A549 (cell line): ENCODE measurements at regions of chr15 and their contacts with region 1.

Region 1: DNA sequence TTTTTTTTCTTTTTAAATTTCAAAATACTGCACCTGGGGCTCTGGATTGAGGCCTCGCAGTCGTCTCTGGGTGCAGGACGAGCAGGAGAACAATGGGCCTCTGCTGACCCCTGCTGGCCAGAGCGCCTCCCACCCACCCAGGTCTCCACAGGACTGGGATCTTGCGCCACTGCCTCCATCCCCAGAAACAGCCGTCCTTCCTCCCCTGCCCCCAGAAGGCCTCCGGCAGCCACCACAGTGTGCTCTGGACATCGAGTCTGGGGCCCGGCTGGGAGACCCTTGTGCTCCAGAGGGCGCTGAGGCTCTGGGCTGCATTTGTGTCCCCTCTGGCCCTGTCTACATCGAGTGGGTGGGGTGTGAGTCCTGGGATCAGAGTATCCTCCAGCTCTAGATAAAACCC is 6.6 kb upstream of the ACSBG1 start:
- DNase-seq: peak; percentile 83 to 94
- ATAC-seq: peak; percentile 95 to 98
- H3K4me3 ChIP-seq: no peak overlapping the region
- H3K27ac ChIP-seq: no peak overlapping the region
- H3K4me1 ChIP-seq: no peaks in the 10 kb centered on the region
- CTCF ChIP-seq: peak; percentile 94
- EP300 ChIP-seq: no peak
- POLR2A ChIP-seq: no peak
- RAD21 ChIP-seq: peak; percentile 96 to 99

Region 2: DNA sequence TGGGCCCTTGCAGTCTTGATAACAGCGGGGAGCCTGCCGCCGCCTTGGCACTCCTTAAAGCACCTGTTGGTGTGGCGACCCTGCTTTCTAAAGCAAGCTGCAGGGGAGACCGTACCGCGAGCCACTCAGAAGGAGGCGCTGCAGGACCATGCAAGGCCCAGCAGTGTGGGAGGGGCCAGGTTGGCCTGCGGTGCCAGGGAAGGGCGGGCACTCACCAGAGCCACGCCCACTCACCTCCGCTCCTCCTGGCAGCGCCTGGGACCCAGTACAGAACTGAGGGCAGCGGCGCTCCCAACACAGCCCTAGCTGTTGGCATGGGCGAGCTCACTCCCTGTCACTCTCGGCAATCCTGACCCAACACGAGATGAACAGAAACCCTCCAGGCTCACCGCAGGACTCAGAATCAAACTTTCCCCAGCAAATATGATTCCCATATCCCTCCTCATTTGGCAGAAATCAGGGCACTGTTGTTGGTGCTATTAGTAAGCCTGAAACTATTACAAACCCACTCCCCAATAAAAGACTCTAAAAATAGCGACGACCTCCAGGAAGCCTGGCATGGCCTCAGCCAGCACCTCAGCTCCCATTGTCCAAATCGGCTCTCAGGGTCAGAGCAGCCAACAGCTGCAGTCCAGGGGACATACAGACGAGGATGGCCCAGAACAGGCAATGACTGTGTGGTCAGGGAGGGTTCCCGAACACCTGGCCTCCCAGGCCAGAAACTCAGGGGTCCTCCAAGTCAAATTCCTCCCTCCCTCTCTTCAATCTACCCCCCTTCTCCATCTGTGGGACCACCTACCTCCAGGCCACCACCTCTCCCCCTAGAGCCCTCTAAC is 240.7 kb before region 1 on chr15:
- CTCF ChIA-PET with region 1: interaction called, 44 read pairs
- POLR2A ChIA-PET with region 1: no interaction called
- DNase-seq: peak; percentile 86 to 92
- ATAC-seq: peak; percentile 88 to 98
- H3K4me3 ChIP-seq: no peak overlapping the region
- H3K27ac ChIP-seq: no peak overlapping the region
- H3K4me1 ChIP-seq: peaks cover 6% of the 10 kb centered on the region
- CTCF ChIP-seq: peak; percentile 90
- EP300 ChIP-seq: no peak
- POLR2A ChIP-seq: no peak
- RAD21 ChIP-seq: peak; percentile 98 to 99

Region 3: GRCh38 chr15:78140292-78140691 is 100.7 kb before region 1 on chr15:
- CTCF ChIA-PET with region 1: interaction called, 18 read pairs
- POLR2A ChIA-PET with region 1: no interaction called
- DNase-seq: no peak
- ATAC-seq: peak in 1 of 2 experiments; percentile 48; a peak in 2 of 6 replicates
- H3K4me3 ChIP-seq: no peak overlapping the region
- H3K27ac ChIP-seq: no peak overlapping the region
- H3K4me1 ChIP-seq: no peaks in the 10 kb centered on the region
- CTCF ChIP-seq: no peak
- EP300 ChIP-seq: no peak
- POLR2A ChIP-seq: no peak
- RAD21 ChIP-seq: no peak

Region 4: DNA sequence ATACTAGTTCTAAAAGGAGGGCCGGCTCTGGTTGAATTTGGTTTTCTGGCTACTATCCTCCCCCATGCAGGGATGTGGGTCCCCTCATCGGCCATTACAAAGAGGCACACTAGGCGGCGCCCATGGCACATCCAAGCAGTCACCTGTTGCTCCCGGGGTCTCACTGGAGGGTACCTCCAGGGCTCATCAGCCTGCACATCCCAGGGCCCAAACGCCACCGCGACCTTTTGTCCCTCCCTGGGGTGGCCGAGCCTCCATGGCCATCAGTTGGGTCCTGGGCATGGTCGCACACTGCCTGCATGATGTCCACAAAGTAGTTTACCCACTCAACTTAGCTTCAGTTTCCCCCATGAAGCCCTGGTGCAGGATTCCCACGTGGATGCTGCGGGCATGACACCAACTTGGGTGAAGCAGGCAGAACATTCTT is 63.5 kb before region 1 on chr15:
- CTCF ChIA-PET with region 1: interaction called, 274 read pairs
- POLR2A ChIA-PET with region 1: no interaction called
- DNase-seq: peak; percentile 44 to 61
- ATAC-seq: peak; percentile 75 to 87
- H3K4me3 ChIP-seq: no peak overlapping the region
- H3K27ac ChIP-seq: no peak overlapping the region
- H3K4me1 ChIP-seq: no peaks in the 10 kb centered on the region
- CTCF ChIP-seq: peak; percentile 93
- EP300 ChIP-seq: no peak
- POLR2A ChIP-seq: no peak
- RAD21 ChIP-seq: peak; percentile 94 to 95

Region 5: GRCh38 chr15:78212546-78213424 is 28.2 kb before region 1 on chr15:
- CTCF ChIA-PET with region 1: interaction called, 75 read pairs
- POLR2A ChIA-PET with region 1: no interaction called
- DNase-seq: peak; percentile 66 to 89
- ATAC-seq: peak; percentile 82 to 88
- H3K4me3 ChIP-seq: no peak overlapping the region
- H3K27ac ChIP-seq: peak overlapping the region; percentile 52 to 69
- H3K4me1 ChIP-seq: peaks cover 56% of the 10 kb centered on the region
- CTCF ChIP-seq: no peak
- EP300 ChIP-seq: no peak
- POLR2A ChIP-seq: no peak
- RAD21 ChIP-seq: no peak

Region 6: DNA sequence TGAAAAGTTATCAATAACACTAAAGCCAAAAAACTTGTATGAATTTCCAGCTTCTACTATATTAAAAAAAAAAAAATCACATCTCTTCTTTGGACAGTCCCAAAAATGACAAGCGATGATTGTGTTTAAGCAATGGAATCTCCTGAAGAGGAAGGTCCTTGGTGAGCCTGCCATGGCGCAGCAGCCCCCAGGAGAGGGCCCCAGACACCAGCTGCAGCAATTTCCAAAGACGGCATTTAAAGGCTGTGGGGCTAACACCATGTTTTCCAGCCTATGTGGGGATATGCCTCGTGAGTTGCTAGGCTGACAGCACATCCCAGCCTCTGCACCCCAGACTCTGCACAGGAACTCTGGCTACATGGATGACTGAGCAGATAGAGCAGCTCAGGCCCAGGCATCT is 43.8 kb after region 1 on chr15:
- CTCF ChIA-PET with region 1: interaction called, 33 read pairs
- POLR2A ChIA-PET with region 1: no interaction called
- DNase-seq: no peak
- ATAC-seq: no peak; a peak in 1 of 6 replicates
- H3K4me3 ChIP-seq: no peak overlapping the region
- H3K27ac ChIP-seq: no peak overlapping the region
- H3K4me1 ChIP-seq: no peaks in the 10 kb centered on the region
- CTCF ChIP-seq: no peak; the same call in 2 of the 3 replicates
- EP300 ChIP-seq: no peak
- POLR2A ChIP-seq: no peak
- RAD21 ChIP-seq: 0 out of 5 replicates have a peak, but pooled peaks of 1 of the 2 experiments have one; percentile 10